ENCODE measurements at regions of chr3 and their contacts with region 1.

Region 1: DNA sequence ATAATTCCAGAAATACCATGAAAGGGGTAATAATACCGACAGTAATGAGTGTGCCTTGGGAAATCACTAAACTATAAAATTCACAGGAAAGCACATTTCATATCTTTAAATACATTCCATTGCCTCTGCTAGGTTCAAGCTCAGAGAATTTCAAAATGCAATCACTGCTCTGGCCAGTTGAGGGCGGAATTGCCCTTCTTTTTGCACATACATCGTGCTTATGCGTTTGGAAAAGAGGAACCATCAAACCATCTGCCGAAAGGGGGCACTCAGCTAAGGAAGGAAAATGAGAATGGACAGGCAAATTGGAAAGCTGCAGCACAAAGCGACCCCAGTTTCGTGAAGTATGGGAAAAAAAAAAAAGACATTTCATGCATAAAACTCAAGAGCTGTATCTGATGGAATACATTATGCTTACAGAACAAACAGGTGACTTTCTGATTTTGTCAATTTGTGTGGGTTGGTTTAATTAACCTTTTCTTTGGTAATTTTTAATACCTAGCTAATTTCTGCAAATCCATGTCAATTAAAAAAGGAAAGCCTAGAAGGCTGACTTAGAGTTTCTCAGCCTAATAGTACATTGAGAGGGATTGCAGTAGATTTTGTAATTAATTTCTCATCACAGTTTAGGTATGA is 61.4 kb downstream of the TUSC7 start:
- DNase-seq: peak; percentile 80
- ATAC-seq: peak; percentile 99
- H3K4me3 ChIP-seq: no peak overlapping the region
- H3K27ac ChIP-seq: no peak overlapping the region
- H3K4me1 ChIP-seq: no peaks in the 10 kb centered on the region
- H3K27me3 ChIP-seq: no peaks in the 10 kb centered on the region
- CTCF ChIP-seq: peak; percentile 100
- POLR2A ChIP-seq: no peak
- RAD21 ChIP-seq: peak; percentile 98

Region 2: GRCh38 chr3:116994351-116994879 is 223.5 kb after region 1 on chr3:
- CTCF ChIA-PET with region 1: no interaction called
- POLR2A ChIA-PET with region 1: no interaction called
- dilution Hi-C with region 1: no loop called
- in situ Hi-C with region 1: no loop called
- intact Hi-C with region 1: no loop called
- DNase-seq: no peak
- ATAC-seq: no peak
- H3K4me3 ChIP-seq: no peak overlapping the region
- H3K27ac ChIP-seq: no peak overlapping the region
- H3K4me1 ChIP-seq: no peaks in the 10 kb centered on the region
- H3K27me3 ChIP-seq: no peaks in the 10 kb centered on the region
- CTCF ChIP-seq: no peak
- POLR2A ChIP-seq: no peak
- RAD21 ChIP-seq: no peak

Region 3: GRCh38 chr3:117019082-117019713 is 248.3 kb after region 1 on chr3:
- CTCF ChIA-PET with region 1: interaction called, 3 read pairs
- POLR2A ChIA-PET with region 1: no interaction called
- dilution Hi-C with region 1: no loop called
- in situ Hi-C with region 1: no loop called
- intact Hi-C with region 1: loop called (anchors 5 kb)
- DNase-seq: peak; percentile 76
- ATAC-seq: peak; percentile 94
- H3K4me3 ChIP-seq: no peak overlapping the region
- H3K27ac ChIP-seq: no peak overlapping the region
- H3K4me1 ChIP-seq: no peaks in the 10 kb centered on the region
- H3K27me3 ChIP-seq: no peaks in the 10 kb centered on the region
- CTCF ChIP-seq: peak; percentile 85
- POLR2A ChIP-seq: no peak
- RAD21 ChIP-seq: peak; percentile 92

Region 4: DNA sequence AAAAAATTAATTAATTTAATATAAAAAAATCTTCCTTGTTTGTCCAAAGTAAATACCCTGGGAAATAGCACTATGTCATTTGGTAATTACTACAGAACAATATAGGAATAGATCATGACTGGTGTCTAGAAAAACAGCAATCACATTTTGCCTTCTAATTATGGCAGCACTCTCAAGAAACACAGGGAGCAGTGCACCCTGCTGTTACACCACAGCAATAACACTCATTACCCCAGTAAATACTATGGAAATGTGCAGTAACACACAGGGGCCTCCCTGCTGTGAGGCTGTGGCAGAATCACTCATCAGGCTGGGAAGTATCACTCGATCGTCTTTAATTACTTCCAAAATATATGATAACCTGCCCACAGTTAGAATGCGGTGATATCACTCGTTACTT is 584.6 kb after region 1 on chr3:
- CTCF ChIA-PET with region 1: no interaction called
- POLR2A ChIA-PET with region 1: no interaction called
- dilution Hi-C with region 1: no loop called
- in situ Hi-C with region 1: no loop called
- intact Hi-C with region 1: loop called (anchors 10 kb)
- DNase-seq: peak; percentile 22
- ATAC-seq: peak; percentile 53; the same call in 1 of the 2 replicates
- H3K4me3 ChIP-seq: no peak overlapping the region
- H3K27ac ChIP-seq: no peak overlapping the region
- H3K4me1 ChIP-seq: no peaks in the 10 kb centered on the region
- H3K27me3 ChIP-seq: no peaks in the 10 kb centered on the region
- CTCF ChIP-seq: peak; percentile 44; the same call in 1 of the 2 replicates
- POLR2A ChIP-seq: no peak
- RAD21 ChIP-seq: peak; percentile 62

Region 5: GRCh38 chr3:117719316-117719926 is 948.5 kb after region 1 on chr3:
- CTCF ChIA-PET with region 1: interaction called, 3 read pairs
- POLR2A ChIA-PET with region 1: no interaction called
- dilution Hi-C with region 1: no loop called
- in situ Hi-C with region 1: loop called (anchors 25 kb)
- intact Hi-C with region 1: loop called (anchors 5 kb)
- DNase-seq: peak; percentile 40
- ATAC-seq: peak; percentile 62
- H3K4me3 ChIP-seq: no peak overlapping the region
- H3K27ac ChIP-seq: no peak overlapping the region
- H3K4me1 ChIP-seq: no peaks in the 10 kb centered on the region
- H3K27me3 ChIP-seq: no peaks in the 10 kb centered on the region
- CTCF ChIP-seq: peak; percentile 72
- POLR2A ChIP-seq: no peak
- RAD21 ChIP-seq: peak; percentile 75

Measured in IMR-90 (cell line).